ENCODE measurements at regions of chr20 and their contacts with region 1.

Region 1: GRCh38 chr20:43563429-43563828 is 4.6 kb downstream of the SGK2 start:
- DNase-seq: no peak
- H3K4me3 ChIP-seq: no peak overlapping the region
- H3K27ac ChIP-seq: peak overlapping the region in 33 of 59 donors; percentile 3 to 98 (median 92)
- H3K27me3 ChIP-seq: no peaks in the 10 kb centered on the region
- CTCF ChIP-seq: peak in 11 of 56 donors; percentile 8 to 41 (median 12)

Region 2: DNA sequence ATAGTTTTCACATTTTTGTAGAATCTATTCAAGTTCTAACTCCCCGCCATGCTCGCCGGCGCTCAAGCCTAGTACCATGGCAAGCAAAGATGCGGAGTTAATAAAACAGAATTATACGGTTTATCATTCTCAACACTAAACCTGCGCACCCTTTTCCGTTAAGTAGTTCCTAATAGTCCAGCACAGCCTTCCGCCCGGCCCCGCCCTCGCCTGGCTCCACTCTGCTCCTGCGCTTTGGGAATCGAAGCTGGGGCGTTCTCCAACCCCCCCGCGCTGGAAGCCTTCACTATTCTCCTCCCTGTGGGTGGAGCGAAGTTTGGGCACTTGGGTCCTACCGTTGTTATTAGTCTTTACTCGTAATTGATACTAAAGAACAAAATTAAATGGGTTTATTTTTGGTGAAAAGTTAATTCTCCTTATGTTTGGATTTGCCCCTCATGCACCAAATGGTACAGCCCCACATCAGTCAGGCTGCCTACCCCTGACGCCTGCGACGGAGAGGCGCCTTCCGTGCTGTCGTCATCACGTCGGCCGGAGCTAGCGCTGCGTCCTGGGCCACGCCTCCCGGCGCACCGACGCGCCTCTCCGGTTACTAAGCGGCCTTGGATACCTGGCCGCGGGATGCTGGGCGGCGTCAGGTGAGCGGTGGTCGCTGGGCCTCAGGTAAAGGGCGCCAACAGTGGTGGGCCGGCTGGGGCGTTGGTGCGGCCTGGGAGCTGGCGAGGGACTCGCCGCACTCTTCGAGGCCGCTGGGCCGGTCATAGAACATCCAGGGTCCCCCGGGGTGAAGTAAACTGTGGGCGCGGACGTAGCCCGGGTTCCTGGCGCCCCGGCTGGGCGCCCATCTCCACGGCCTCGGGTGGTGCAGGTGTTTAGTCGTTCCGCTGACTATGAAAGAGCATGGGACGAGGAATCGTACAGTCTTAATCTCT is 27.2 kb after region 1 on chr20 and contains the start of gene IFT52:
- intact Hi-C with region 1: loop called in 1 of 2 experiments (anchors 2 kb)
- DNase-seq: peak; percentile 82 to 93 (median 92)
- H3K4me3 ChIP-seq: peak within 1 kb of the TSS; percentile 75 to 100 (median 93)
- H3K27ac ChIP-seq: peak within 1 kb of the TSS; percentile 46 to 97 (median 89)
- H3K27me3 ChIP-seq: no peaks in the 10 kb centered on the region
- CTCF ChIP-seq: peak in 25 of 56 donors; percentile 0 to 51 (median 23)
- total RNA-seq, gene IFT52: 16.3 to 36.7 (median 24.2) TPM